MCF 10A (cell line): ENCODE measurements at regions of chr19 and their contacts with region 1.

Region 1: DNA sequence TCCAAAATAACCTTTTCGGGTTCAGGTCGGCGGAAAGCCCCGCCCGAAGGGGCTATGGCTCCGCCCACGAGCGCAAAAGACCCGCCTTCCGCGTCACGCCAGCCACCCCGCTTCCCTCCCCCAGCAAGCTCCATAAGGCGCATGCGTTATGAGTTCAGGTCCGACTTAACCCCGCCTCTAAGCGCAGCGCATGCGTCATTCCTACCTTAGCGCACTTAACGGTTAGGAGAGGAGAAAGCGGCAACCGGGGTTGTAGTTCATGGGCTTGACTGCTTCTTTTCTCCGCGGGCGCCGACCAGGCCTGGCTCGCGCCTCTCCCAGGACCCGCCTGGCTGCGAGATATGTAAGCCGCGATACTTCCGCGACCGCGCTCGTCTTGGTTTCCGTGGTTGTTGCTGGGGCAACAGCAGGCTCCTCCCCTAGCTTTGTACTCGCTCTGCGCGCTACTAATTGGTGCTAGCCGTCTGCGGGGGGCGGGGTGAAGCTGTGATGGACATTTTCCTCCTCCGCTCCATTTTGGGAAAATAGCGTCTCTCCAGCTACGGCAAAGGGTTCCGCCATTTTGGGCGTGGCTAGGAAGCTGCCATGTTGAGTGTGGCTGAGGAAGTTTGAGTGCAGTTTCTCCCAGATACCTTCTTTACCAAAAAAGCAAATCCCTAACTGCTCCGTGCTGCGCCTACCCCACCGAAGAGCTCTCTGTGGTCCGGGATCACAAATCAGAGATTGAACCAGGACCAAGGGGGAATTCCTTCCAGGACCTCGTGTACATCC is at the start of gene B9D2:
- DNase-seq: peak; percentile 99
- H3K4me3 Mint-ChIP-seq: peak within 1 kb of the TSS; percentile 98
- H3K27ac Mint-ChIP-seq: peak within 1 kb of the TSS; percentile 100
- H3K4me1 Mint-ChIP-seq: peaks cover 21% of the 10 kb centered on the region
- H3K27me3 Mint-ChIP-seq: no peaks in the 10 kb centered on the region
- CTCF ChIP-seq: no peak
- total RNA-seq, gene B9D2: 5.5 and 5.7 TPM in 2 replicates

Region 2: DNA sequence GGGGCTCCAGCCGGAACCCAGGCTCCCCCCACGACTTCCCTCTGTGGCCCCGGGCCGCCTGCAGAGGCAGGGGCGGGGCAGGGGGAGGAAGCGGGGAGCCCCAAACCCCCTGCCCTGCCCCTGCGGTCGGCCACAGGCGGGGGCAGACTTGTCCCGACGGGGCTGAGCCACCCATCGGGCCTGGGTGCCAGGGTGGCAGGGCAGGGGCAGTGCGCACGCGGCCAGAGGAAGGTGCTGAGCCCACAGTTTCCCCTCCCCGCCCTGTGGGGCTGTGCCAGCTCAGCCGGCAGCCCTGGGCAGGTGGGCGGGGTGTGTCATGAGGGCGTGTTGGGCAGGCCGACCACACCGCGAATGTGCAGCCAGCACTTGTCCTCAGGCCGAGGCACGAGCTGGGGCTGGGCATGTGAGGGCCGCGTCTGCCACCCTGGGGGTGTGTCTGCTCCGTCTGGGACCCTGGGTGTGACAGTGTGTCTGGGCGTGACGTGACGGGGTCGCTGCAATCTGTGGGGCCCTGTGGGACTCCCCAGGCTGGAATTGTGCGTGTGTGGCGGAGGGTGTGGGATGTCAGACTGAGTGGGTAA is 36.3 kb before region 1 on chr19:
- CTCF ChIA-PET with region 1: no interaction called
- POLR2A ChIA-PET with region 1: interaction called, 15 read pairs
- intact Hi-C with region 1: no loop called
- DNase-seq: peak; percentile 92
- H3K4me3 Mint-ChIP-seq: peak overlapping the region; percentile 71
- H3K27ac Mint-ChIP-seq: peak overlapping the region; percentile 41
- H3K4me1 Mint-ChIP-seq: peaks cover 54% of the 10 kb centered on the region
- H3K27me3 Mint-ChIP-seq: no peaks in the 10 kb centered on the region
- CTCF ChIP-seq: no peak

Region 3: GRCh38 chr19:41353466-41354342 is 10.2 kb before region 1 on chr19 and contains the start of gene TGFB1:
- CTCF ChIA-PET with region 1: interaction called, 34 read pairs
- POLR2A ChIA-PET with region 1: interaction called, 41 read pairs
- intact Hi-C with region 1: no loop called
- DNase-seq: peak; percentile 84
- H3K4me3 Mint-ChIP-seq: peak within 1 kb of the TSS; percentile 98
- H3K27ac Mint-ChIP-seq: no peak within 1 kb of the TSS
- H3K4me1 Mint-ChIP-seq: peaks cover 24% of the 10 kb centered on the region
- H3K27me3 Mint-ChIP-seq: no peaks in the 10 kb centered on the region
- CTCF ChIP-seq: peak; percentile 92
- total RNA-seq, gene TGFB1: 27.8 and 33.7 TPM in 2 replicates

Region 4: DNA sequence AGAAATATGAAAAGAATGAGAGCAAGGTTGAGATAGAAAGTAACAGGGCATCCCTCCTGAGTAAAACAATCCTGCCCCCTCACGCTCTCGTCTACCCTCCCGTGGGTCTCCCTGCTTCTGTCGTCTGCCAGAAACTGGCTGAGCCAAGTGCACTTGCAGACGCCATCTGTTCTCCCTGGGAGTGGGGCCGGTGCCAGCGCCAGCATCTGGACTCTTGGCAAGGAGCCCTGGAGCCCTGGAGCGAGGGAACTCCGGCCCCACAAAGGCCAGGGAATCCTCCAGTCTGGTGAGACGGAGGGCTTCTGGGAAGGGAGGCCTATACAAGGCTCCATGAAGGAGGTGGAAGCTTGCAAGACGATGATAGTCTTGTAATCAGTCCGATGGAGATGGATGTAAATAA is 10.1 kb after region 1 on chr19:
- CTCF ChIA-PET with region 1: interaction called, 5 read pairs
- POLR2A ChIA-PET with region 1: interaction called, 13 read pairs
- intact Hi-C with region 1: no loop called
- DNase-seq: peak; percentile 94
- H3K4me3 Mint-ChIP-seq: no peak overlapping the region
- H3K27ac Mint-ChIP-seq: peak overlapping the region; percentile 17
- H3K4me1 Mint-ChIP-seq: peaks cover 29% of the 10 kb centered on the region
- H3K27me3 Mint-ChIP-seq: no peaks in the 10 kb centered on the region
- CTCF ChIP-seq: no peak

Region 5: DNA sequence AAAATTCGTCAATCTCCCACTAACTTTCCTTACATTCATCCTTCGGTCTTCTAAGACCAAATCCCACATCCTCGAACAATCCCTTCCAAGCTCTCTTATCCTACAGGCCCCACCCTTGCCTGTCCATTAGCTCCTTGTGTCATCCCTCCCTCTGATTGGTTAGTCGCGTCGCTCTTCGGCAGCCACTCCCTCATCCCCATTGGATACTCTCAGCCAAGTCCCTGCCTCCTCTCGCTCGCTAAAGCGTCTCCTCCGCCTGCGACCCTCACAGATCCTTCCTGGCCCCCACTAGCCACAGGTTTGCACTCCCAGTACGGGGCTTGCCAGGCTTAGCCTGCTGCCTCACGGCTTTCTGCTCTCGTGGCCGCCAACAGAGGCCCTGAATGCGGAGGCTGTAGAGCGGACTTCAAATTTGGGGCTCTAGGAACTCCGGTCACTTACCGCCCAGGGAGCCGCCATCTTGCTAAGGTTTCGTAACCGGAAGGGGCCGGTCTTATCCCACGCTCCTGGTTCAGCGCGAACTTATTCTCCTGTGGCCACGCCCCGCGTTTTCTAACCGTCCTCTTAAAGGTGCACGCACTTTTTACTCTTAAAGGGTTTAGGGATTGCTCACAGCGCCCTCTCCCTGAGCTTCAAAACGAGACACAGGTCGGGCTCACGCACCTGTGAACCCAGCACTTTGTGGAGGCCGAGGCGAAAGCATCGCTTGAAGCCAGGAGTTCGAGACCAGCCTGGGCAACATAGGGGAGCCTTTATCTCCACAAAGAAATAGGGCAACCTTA is 75.7 kb after region 1 on chr19 and contains the start of gene DMAC2:
- CTCF ChIA-PET with region 1: interaction called, 4 read pairs
- POLR2A ChIA-PET with region 1: interaction called, 10 read pairs
- intact Hi-C with region 1: no loop called
- DNase-seq: peak; percentile 100
- H3K4me3 Mint-ChIP-seq: no peak within 1 kb of the TSS
- H3K27ac Mint-ChIP-seq: peak within 1 kb of the TSS; percentile 39
- H3K4me1 Mint-ChIP-seq: peaks cover 13% of the 10 kb centered on the region
- H3K27me3 Mint-ChIP-seq: peaks cover 20% of the 10 kb centered on the region
- CTCF ChIP-seq: peak; percentile 30
- total RNA-seq, gene DMAC2: 27.7 and 34.8 TPM in 2 replicates